H1 (cell line): ENCODE measurements at regions of chr20 and their contacts with region 1.

Region 1: DNA sequence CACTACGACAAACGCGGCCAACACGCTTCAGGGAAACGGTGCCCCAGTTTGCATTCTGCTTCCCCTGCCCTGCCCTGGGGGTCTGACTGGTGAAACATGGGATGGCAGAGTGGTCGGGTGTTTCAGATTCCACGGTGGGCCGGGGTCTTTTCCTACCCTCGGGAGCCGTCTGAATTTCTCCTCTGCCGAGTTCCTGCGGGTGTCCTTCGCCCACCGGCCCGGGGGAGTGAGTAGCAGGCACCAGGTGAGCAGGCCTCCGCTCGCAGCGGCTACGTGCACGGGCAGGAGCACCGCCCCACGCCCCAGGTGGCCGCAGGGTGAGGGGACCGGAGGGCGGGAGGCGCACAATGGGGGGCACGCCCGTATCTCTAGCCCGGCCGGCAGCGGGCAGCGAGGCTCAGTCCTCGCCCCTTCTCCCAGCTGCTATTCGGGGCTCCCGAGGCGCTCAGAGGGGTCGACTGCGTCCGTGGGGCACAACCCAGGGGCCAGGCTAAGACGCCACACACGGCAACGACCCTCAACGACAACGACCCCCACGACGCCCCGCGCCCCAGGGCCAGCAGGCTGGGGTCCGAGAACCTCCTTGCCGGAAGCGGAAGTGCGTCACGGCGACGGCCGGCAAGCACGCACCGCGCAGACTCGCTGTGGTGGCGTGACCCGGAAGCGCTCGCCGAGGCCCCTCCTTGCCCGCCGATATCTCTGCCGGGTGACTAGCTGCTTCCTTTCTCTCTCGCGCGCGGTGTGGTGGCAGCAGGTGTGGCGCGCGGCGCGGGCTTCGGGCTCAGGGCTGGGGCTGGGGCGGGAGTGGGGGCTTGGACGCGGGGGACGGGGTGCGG is at the start of gene RPS21:
- DNase-seq: peak in 1 of 2 experiments; percentile 90
- H3K4me3 ChIP-seq: peak within 1 kb of the TSS; percentile 93 to 100 (median 99)
- H3K27ac ChIP-seq: peak within 1 kb of the TSS; percentile 88
- H3K4me1 ChIP-seq: peaks cover 0 to 11% (median 2%) of the 10 kb centered on the region in 4 experiments; a peak in 5 of 7 replicates
- H3K27me3 ChIP-seq: no peaks in the 10 kb centered on the region
- CTCF ChIP-seq: no peak
- EP300 ChIP-seq: no peak
- POLR2A ChIP-seq: peak; percentile 91 to 96
- RAD21 ChIP-seq: no peak
- total RNA-seq, gene RPS21: 1,787 and 1,829 TPM in 2 replicates

Region 2: GRCh38 chr20:62069741-62070216 is 316.8 kb before region 1 on chr20:
- CTCF ChIA-PET with region 1: no interaction called
- POLR2A ChIA-PET with region 1: no interaction called
- DNase-seq: no peak
- H3K4me3 ChIP-seq: no peak overlapping the region
- H3K27ac ChIP-seq: no peak overlapping the region
- H3K4me1 ChIP-seq: peaks cover 5 to 11% (median 7%) of the 10 kb centered on the region in 4 experiments
- H3K27me3 ChIP-seq: no peaks in the 10 kb centered on the region
- CTCF ChIP-seq: no peak
- EP300 ChIP-seq: no peak
- POLR2A ChIP-seq: no peak
- RAD21 ChIP-seq: no peak

Region 3: GRCh38 chr20:62327726-62328495 is 58.7 kb before region 1 on chr20:
- CTCF ChIA-PET with region 1: interaction called, 22 read pairs
- POLR2A ChIA-PET with region 1: interaction called, 6 read pairs
- DNase-seq: no peak
- H3K4me3 ChIP-seq: no peak overlapping the region
- H3K27ac ChIP-seq: no peak overlapping the region
- H3K4me1 ChIP-seq: no peaks in the 10 kb centered on the region
- H3K27me3 ChIP-seq: no peaks in the 10 kb centered on the region
- CTCF ChIP-seq: peak in 1 of 3 experiments; percentile 13; a peak in 1 of 4 replicates
- EP300 ChIP-seq: no peak
- POLR2A ChIP-seq: no peak
- RAD21 ChIP-seq: peak in 1 of 2 experiments; percentile 20; a peak in 1 of 4 replicates

Region 4: GRCh38 chr20:62357187-62357667 is 29.4 kb before region 1 on chr20:
- CTCF ChIA-PET with region 1: interaction called, 212 read pairs
- POLR2A ChIA-PET with region 1: interaction called, 213 read pairs
- DNase-seq: no peak
- H3K4me3 ChIP-seq: no peak overlapping the region
- H3K27ac ChIP-seq: no peak overlapping the region
- H3K4me1 ChIP-seq: peaks cover 3 to 59% (median 46%) of the 10 kb centered on the region in 4 experiments
- H3K27me3 ChIP-seq: no peaks in the 10 kb centered on the region
- CTCF ChIP-seq: no peak
- EP300 ChIP-seq: no peak
- POLR2A ChIP-seq: no peak
- RAD21 ChIP-seq: no peak

Region 5: GRCh38 chr20:62376112-62377063 is 10.2 kb before region 1 on chr20:
- CTCF ChIA-PET with region 1: interaction called, 212 read pairs
- POLR2A ChIA-PET with region 1: interaction called, 213 read pairs
- DNase-seq: peak; percentile 78 to 85
- H3K4me3 ChIP-seq: no peak overlapping the region
- H3K27ac ChIP-seq: peak overlapping the region; percentile 71; the same call in 1 of the 2 replicates
- H3K4me1 ChIP-seq: peaks cover 0 to 29% (median 28%) of the 10 kb centered on the region in 4 experiments; a peak in 6 of 7 replicates
- H3K27me3 ChIP-seq: no peaks in the 10 kb centered on the region
- CTCF ChIP-seq: peak; percentile 59 to 97 (median 79)
- EP300 ChIP-seq: peak in 1 of 2 experiments; percentile 61; a peak in 1 of 3 replicates
- POLR2A ChIP-seq: peak in 1 of 2 experiments; percentile 73; a peak in 2 of 3 replicates
- RAD21 ChIP-seq: peak; percentile 68 to 77